Right cardiac atrium (tissue), 5 donors: ENCODE measurements at regions of chr3 and their contacts with region 1.

Region 1: GRCh38 chr3:66195347-66195783 is 25.4 kb upstream of the SLC25A26 start:
- DNase-seq: peak; percentile 66 to 86 (median 80)
- ATAC-seq: peak; percentile 66 to 69
- H3K4me3 ChIP-seq: peak overlapping the region; percentile 40
- H3K27ac ChIP-seq: peak overlapping the region; percentile 86
- H3K4me1 ChIP-seq: peaks cover 2% of the 10 kb centered on the region
- H3K27me3 ChIP-seq: no peaks in the 10 kb centered on the region

Region 2: DNA sequence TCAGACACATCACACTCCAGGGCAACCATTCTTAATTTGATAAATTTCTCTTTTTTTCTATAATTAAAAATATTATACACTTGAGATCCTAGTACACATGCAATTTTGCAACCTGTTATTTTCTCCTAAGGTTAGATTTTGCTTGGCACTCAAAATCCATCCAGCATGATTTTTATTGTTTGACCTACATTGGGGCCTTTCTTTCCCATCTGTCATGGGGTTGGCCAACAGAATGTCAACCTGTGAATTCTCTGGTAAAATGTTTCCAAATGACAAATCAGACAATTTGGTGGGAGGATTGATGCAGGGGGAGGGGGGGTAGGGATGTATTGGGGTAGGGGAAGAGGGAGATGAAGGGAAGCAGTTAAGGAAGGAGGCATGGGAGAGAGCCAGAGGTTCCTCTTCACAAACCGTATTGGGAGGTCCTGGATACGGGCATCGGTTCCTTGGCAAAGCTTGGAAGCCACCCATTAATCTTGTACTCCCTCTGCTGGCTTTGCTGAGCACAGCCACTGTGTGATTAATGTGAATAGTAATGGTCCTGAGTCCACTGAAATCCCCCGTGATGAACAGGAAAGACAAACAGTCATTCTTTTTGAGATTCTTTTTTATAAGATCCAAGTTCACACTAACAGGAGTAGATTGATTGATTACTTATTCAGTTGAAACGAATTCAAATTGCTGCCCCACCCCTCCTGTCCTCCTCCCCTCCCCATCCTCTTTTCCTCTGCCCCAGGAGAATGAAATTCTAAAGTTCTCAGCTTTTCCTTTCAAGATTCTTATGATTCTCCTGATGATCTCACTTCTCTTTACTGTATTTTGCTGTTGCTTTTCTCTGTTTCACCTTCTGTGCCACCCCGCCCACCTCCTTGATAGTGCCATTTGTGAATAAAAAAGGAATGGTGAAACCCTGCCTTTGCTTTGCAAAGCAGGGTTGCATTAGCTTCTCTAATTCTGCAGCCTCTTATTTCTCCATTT is 56.7 kb before region 1 on chr3:
- intact Hi-C with region 1: loop called in 1 of 4 experiments (anchors 10 kb)
- DNase-seq: peak; percentile 30 to 73 (median 69)
- ATAC-seq: peak; percentile 66 to 89
- H3K4me3 ChIP-seq: no peak overlapping the region
- H3K27ac ChIP-seq: no peak overlapping the region
- H3K4me1 ChIP-seq: no peaks in the 10 kb centered on the region
- H3K27me3 ChIP-seq: no peaks in the 10 kb centered on the region